Adrenal gland (tissue), 19 donors: ENCODE measurements at regions of chr14 and their contacts with region 1.

Region 1: GRCh38 chr14:23104591-23105347 is at the start of gene CIROP:
- DNase-seq: no peak
- H3K4me3 ChIP-seq: no peak within 1 kb of the TSS
- H3K27ac ChIP-seq: no peak within 1 kb of the TSS
- H3K4me1 ChIP-seq: peaks cover under 1% of the 10 kb centered on the region in 2 donors
- H3K27me3 ChIP-seq: no peaks in the 10 kb centered on the region
- CTCF ChIP-seq: no peak
- POLR2A ChIP-seq: no peak
- total RNA-seq, gene CIROP: not detected

Region 2: DNA sequence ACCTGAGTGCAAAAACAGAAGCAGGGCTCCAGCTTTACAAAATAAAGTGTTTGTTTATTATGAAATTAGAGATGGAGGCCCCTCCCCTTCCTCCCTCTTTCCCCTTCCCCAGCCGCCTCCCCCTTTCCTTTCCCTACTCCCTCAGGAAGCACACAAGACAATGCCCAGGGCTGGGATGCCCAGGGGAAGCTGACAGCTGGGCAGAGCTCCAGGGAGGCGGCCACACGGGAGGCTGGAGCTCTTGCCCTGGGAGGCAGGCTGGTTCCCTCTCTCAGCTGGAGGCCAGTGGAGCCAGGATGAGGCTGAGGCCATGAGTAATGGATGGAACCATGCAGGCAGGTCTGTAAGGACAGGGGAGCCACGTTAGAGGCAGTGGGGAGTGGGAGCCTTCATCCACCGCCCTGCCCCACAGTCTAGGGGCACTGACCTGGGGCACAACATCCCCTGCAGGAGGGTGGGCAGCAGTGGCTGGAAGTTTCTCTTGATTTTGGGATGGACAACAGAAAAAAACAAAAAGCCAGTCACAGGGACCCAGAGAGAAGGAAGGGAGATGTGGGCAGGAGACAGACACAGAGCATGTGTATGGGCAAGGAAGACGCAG is 57.6 kb before region 1 on chr14:
- intact Hi-C with region 1: no loop called
- DNase-seq: no peak
- H3K4me3 ChIP-seq: no peak overlapping the region
- H3K27ac ChIP-seq: no peak overlapping the region
- H3K4me1 ChIP-seq: no peaks in the 10 kb centered on the region
- H3K27me3 ChIP-seq: no peaks in the 10 kb centered on the region
- CTCF ChIP-seq: no peak
- POLR2A ChIP-seq: no peak

Region 3: GRCh38 chr14:23057757-23058653 is 46.8 kb before region 1 on chr14:
- intact Hi-C with region 1: loop called in 1 of 2 experiments (anchors 5 kb)
- DNase-seq: peak; percentile 81 to 94 (median 90)
- H3K4me3 ChIP-seq: peak overlapping the region in 2 of 4 donors; percentile 54 to 90
- H3K27ac ChIP-seq: peak overlapping the region in 3 of 5 donors; percentile 57 to 77 (median 73)
- H3K4me1 ChIP-seq: peaks cover 12 to 26% of the 10 kb centered on the region in 2 donors
- H3K27me3 ChIP-seq: no peaks in the 10 kb centered on the region
- CTCF ChIP-seq: peak; percentile 93 to 97 (median 96)
- POLR2A ChIP-seq: no peak

Region 4: GRCh38 chr14:23068476-23069412 is 36.0 kb before region 1 on chr14:
- intact Hi-C with region 1: loop called (anchors 5 kb)
- DNase-seq: peak; percentile 85 to 95 (median 87)
- H3K4me3 ChIP-seq: no peak overlapping the region
- H3K27ac ChIP-seq: peak overlapping the region in 3 of 5 donors; percentile 18 to 67 (median 66)
- H3K4me1 ChIP-seq: peaks cover 21 to 48% of the 10 kb centered on the region in 2 donors
- H3K27me3 ChIP-seq: no peaks in the 10 kb centered on the region
- CTCF ChIP-seq: peak; percentile 98 to 100 (median 99)
- POLR2A ChIP-seq: no peak

Region 5: DNA sequence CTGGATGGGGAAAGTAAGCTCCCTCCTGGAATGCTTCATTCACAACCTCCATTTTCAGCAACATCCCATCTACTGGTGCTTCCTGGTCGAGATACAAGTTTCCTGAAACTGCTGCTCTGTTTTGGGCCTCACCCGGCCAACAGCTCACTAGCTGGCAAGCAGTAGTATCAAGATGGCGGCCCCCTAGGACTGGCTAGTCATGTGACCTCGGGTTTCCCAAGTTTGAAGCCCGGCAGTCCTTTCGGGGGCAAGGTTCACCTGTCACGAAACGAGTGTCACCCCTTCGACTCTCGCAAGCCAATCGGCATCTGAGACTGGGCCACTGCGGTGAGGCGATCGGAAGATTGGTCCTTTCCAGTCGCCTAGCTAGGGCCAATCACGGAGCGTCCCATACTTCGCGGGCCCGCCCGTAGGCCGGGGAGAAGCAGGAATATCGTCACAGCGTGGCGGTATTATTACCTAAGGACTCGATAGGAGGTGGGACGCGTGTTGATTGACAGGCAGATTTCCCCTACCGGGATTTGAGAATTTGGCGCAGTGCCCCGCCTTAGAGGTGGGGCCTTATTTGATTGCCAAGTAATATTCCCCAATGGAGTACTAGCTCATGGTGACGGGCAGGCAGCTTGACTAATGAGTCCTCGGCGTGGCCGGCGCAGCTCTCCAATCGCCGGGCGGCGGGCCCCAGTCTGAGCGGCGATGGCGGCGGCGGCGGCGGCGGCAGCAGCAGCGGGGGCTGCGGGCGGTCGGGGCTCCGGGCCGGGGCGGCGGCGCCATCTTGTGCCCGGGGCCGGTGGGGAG is 216.2 kb after region 1 on chr14 and contains the start of gene PABPN1:
- intact Hi-C with region 1: no loop called
- DNase-seq: peak; percentile 99 to 100 (median 100)
- H3K4me3 ChIP-seq: peak within 1 kb of the TSS in 3 of 4 donors; percentile 19 to 86 (median 72)
- H3K27ac ChIP-seq: peak within 1 kb of the TSS; percentile 76 to 99 (median 90)
- H3K4me1 ChIP-seq: peaks cover 19 to 30% of the 10 kb centered on the region in 2 donors
- H3K27me3 ChIP-seq: no peaks in the 10 kb centered on the region
- CTCF ChIP-seq: no peak
- POLR2A ChIP-seq: peak; percentile 63 to 87
- total RNA-seq, gene PABPN1: 18.3 to 200 (median 79.3) TPM